Mammary epithelial cell (primary cell): ENCODE measurements at regions of chr1 and their contacts with region 1.

Region 1: DNA sequence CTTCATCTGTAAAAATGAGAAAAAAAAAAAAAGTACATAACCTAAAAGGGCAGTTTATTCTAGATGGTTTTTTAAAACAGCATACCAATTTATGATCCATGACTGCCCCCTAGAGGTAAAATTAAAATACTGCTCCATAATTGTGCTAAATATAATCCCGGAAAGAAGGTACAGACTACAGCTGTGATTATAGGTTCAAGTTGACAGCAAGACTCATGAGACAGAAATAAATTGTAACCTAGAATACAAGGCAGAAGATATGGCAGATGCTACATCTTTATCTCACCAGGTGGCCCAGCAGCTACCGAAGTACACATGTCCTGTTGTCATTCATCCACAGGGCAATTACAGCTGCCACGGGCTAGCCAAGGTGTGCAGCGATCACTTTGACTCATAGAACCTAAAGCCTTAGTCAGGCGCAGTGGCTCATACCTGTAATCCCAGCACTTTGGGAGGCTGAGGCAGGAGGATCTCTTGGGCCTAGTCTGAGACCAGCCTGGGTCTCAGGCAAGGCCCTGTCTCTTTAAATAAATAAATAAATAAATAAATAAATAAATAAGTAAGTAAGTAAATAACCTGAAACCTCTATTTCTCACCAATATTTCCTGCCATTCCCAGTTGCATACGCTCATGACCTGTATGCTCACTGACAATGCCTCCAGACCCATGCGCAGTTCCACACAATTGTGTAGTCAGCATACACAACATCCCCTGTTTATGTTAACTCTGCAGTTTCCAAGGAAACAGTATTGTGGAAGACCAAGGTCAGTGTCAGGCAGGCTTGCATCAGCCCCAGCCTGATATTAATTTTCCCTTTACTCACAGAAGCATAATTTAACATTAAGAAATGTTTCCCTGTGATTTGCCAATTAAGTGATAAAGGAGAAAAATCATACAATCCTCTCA is 18.3 kb upstream of the PPIE start:
- DNase-seq: peak; percentile 44
- H3K4me3 ChIP-seq: no peak overlapping the region
- H3K27ac ChIP-seq: no peak overlapping the region
- H3K4me1 ChIP-seq: peaks cover 2% of the 10 kb centered on the region
- H3K27me3 ChIP-seq: no peaks in the 10 kb centered on the region
- CTCF ChIP-seq: peak; percentile 56 to 66

Region 2: GRCh38 chr1:39462074-39462473 is 258.3 kb before region 1 on chr1:
- CTCF ChIA-PET with region 1: no interaction called
- dilution Hi-C with region 1: no loop called
- in situ Hi-C with region 1: no loop called
- intact Hi-C with region 1: loop called (anchors 10 kb)
- DNase-seq: no peak
- H3K4me3 ChIP-seq: no peak overlapping the region
- H3K27ac ChIP-seq: no peak overlapping the region
- H3K4me1 ChIP-seq: no peaks in the 10 kb centered on the region
- H3K27me3 ChIP-seq: no peaks in the 10 kb centered on the region
- CTCF ChIP-seq: no peak

Region 3: DNA sequence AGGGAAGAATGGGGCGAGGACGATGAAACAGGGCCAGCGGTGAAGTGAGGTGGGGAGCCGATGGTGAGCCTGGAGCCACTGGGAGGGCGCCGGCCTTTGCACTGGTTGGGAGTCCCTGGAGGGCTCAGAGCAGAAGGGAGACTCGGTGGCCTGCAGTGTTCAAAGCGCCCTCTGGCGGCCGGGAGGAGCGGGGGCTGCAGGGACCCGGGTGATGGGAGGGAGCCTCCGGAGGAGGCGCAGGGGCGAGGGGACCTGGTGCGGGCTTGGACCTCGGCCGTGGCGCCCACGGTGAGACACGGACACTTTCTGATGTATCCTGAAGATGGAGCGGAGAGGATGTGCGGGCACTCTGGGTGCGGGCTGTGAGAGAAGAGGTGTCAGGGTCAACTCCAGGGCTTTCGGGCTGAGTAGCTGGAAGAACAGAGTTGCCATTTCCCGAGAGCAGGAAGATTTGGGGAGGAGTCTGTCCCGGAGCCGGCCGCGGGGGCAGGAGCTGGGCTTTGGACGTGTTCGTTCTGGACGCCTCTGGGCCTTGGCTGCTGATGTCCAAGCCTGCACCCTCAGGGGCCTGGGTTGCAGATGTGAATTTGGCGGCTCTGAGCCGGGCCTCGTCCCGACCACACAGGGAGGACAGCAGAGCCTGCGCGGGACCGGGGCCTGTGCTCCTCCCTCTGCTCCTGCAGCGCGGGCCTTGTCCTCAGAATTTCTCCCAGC is 110.6 kb before region 1 on chr1:
- CTCF ChIA-PET with region 1: interaction called, 5 read pairs
- dilution Hi-C with region 1: no loop called
- in situ Hi-C with region 1: no loop called
- intact Hi-C with region 1: loop called (anchors 1 kb)
- DNase-seq: peak; percentile 15
- H3K4me3 ChIP-seq: no peak overlapping the region
- H3K27ac ChIP-seq: no peak overlapping the region
- H3K4me1 ChIP-seq: peaks cover 4% of the 10 kb centered on the region
- H3K27me3 ChIP-seq: no peaks in the 10 kb centered on the region
- CTCF ChIP-seq: peak; percentile 59 to 64

Region 4: GRCh38 chr1:39672551-39672947 is 47.8 kb before region 1 on chr1:
- CTCF ChIA-PET with region 1: no interaction called
- dilution Hi-C with region 1: no loop called
- in situ Hi-C with region 1: no loop called
- intact Hi-C with region 1: loop called (anchors 2 kb)
- DNase-seq: no peak
- H3K4me3 ChIP-seq: no peak overlapping the region
- H3K27ac ChIP-seq: no peak overlapping the region
- H3K4me1 ChIP-seq: peaks cover 18% of the 10 kb centered on the region
- H3K27me3 ChIP-seq: peaks cover 19% of the 10 kb centered on the region
- CTCF ChIP-seq: peak in 1 of 2 donors; percentile 11

Region 5: DNA sequence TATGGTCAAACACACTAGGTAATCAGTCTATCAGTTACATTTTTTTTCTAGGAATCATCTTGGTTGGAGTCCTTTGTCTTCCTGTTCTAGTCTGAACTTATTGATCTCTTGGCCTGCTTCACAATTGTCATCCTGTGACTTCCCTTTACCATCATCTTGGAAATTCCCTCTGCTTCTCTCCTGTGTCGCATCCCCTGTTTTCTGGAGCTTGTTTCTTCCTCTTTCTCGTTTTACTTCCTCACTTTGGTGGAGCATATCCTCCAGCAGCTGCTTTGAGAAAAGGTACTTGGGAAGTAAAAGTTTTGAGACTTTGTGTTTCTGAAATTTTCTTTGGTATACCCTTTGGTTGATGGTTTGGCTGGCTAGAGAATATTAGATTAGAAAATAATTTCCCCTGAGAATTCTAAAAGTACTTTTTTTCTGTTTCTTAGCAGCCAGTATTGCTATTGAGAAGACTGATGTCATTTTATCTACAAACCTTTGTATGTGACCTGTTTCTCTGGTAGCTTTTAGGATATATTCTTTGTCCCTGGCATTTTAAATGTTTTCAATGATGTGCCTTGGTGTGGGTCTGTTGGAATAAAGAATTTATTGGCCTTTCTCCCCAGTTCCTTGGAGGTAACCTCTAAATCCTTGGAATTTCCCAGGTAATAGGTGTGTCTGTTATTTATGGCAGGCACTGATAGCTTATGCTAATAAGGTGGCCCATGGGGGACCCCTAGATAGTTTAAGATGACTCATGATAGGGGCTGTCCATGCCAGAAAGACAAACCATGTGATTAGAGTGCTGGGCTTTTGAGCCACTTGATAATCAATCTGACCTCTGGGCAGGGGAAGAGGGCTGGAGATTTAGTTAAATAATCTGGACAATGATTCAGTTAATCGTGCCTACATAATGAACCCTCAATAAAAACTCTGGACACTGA is 187.4 kb after region 1 on chr1:
- CTCF ChIA-PET with region 1: no interaction called
- dilution Hi-C with region 1: no loop called
- in situ Hi-C with region 1: no loop called
- intact Hi-C with region 1: no loop called
- DNase-seq: no peak
- H3K4me3 ChIP-seq: no peak overlapping the region
- H3K27ac ChIP-seq: no peak overlapping the region
- H3K4me1 ChIP-seq: no peaks in the 10 kb centered on the region
- H3K27me3 ChIP-seq: no peaks in the 10 kb centered on the region
- CTCF ChIP-seq: no peak

Region 6: DNA sequence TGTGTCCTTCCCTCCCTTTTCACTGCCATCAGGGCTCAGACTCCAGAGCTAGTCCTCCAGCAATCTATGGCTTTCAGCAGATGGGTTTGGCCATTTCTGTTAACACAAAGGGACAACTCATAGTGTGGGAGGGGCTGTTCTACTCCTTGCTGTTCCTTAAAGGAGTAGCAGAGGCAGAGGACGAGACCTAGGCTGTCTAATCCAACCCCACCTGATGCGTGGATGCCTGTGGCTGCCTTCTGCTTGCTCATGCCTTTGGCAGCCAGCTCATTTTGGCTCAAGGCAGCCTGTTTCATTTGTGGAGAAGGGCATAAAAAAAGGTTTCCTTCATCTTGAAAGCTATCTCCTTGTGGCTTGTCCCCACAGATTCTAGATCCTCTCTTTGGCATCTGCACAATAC is 261.6 kb after region 1 on chr1:
- CTCF ChIA-PET with region 1: no interaction called
- dilution Hi-C with region 1: no loop called
- in situ Hi-C with region 1: no loop called
- intact Hi-C with region 1: no loop called
- DNase-seq: peak; percentile 96
- H3K4me3 ChIP-seq: no peak overlapping the region
- H3K27ac ChIP-seq: peak overlapping the region; percentile 60
- H3K4me1 ChIP-seq: peaks cover 30% of the 10 kb centered on the region
- H3K27me3 ChIP-seq: no peaks in the 10 kb centered on the region
- CTCF ChIP-seq: no peak

Region 7: DNA sequence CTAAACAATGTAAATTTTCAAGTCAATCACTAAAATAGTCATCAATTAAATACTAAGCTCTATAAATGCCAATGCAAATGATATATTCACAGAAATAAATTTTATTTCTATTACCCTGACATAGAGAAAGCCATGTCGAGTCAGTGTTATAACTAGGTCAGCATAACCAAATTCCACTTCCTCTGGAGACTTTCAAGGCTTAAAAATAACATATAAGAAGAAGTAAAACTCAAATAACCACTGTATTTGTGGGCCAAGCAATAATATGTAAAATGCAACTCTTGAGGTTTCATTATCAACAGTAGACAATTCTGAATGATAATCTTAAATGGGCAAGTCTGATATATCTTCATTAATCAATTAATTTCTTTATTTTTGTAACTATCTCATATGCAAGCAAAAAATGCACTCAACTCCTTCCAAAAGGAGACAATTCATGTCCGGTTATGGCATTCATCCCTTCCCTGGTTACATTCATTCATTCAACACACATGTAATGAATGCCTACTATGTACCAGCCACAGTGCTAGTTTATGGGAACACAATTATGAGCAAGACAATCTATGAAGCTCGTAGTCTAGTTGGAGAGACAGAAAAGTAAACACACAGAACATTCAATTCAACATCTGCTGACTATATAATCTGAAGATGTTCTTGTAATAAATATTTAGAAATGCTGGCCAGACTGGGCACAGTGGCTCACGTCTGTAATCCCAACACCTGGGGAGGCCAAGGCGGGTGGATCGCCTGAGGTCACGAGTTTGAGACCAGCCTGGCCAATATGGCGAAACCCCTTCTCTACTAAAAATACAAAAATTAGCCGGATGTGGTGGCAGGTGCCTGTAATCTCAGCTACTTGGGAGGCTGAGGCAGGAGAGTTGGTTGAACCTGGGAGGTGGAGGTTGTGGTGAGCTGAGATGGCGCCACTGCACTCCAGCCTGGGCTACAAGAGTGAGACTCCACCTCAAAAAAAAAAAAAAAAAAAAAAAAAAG is 283.1 kb after region 1 on chr1:
- CTCF ChIA-PET with region 1: no interaction called
- dilution Hi-C with region 1: no loop called
- in situ Hi-C with region 1: no loop called
- intact Hi-C with region 1: no loop called
- DNase-seq: no peak
- H3K4me3 ChIP-seq: no peak overlapping the region
- H3K27ac ChIP-seq: no peak overlapping the region
- H3K4me1 ChIP-seq: peaks cover 15% of the 10 kb centered on the region
- H3K27me3 ChIP-seq: no peaks in the 10 kb centered on the region
- CTCF ChIP-seq: no peak